HCT116 (cell line): ENCODE measurements at regions of chr22 and their contacts with region 1.

Region 1: DNA sequence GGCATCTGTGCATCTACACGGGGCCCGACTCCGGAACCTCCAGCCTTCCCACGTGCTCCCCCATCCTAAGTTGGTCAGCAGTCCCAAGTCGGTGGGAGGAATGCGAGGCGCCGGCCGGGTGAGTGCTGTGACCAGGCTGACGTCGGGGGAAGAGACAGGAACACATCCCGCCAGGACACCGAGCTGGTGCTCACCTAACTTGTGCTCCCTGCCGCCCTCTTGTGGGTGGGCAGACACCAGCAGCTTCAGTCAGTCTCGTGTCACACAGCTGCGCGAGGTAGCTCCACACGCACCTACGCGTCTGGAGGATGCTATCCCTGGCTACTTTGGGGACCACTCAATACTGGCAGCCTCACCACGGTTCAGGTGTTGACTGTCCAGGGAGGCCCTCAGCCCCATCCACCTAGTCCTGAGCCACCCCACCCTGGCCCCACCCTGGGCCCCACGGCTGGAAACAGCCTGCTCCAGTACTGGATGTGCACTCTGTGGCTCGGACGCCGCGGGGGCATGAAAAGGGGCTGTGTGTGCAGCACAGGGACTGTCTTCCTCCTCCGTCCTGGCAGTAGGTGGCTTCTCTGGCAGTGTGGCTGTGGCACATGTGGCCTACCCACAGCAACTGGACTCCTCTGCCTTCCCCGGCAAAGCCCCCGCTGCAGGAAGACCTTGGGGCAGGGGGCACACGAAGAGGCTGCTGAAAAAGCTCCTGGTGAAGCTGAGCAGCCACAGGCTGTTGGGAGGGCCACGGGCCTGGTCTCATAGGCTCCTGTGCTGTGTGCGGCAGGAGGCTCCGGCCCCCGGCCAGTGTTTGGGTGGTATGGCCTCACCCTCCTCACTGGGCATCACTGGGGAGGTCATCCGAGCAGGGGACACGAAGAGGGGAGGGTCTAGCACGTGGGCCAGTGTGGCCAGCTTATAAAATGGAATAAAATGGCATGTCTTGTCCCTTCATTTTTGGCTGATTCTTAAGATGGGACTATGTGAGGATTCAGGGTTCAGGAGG is 11.2 kb upstream of the BID start:
- DNase-seq: peak; percentile 41
- ATAC-seq: peak; percentile 96
- H3K4me3 ChIP-seq: no peak overlapping the region
- H3K27ac ChIP-seq: no peak overlapping the region
- H3K4me1 ChIP-seq: peaks cover 10 to 21% of the 10 kb centered on the region in 2 experiments; a peak in 3 of 4 replicates
- H3K27me3 ChIP-seq: no peaks in the 10 kb centered on the region
- CTCF ChIP-seq: peak; percentile 52 to 93 (median 82); a peak in 5 of 6 replicates
- POLR2A ChIP-seq: no peak
- RAD21 ChIP-seq: peak; percentile 64

Region 2: DNA sequence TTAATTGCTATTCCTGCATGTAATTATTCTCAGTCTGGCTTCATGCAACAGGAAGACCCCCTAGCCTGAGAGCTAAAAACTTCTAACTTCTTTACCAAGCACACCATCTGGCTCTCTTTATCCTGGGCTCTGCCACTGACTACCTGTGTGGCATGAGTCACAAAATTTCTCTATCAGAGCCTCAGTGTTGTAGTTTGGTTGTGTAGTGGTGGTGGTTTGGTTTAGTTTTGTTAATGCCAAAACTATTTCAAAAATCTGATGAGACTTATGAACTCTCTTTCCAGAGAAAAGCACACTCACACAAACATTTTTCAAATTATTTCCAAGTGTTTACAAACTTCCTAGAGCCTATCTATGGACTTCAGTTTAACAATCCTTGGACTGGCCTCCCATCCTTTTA is 708.2 kb before region 1 on chr22:
- CTCF ChIA-PET with region 1: interaction called, 12 read pairs
- POLR2A ChIA-PET with region 1: no interaction called
- RAD21 ChIA-PET with region 1: no interaction called
- intact Hi-C with region 1: no loop called
- DNase-seq: no peak
- ATAC-seq: no peak; the same call in 1 of the 2 replicates
- H3K4me3 ChIP-seq: no peak overlapping the region
- H3K27ac ChIP-seq: no peak overlapping the region
- H3K4me1 ChIP-seq: peaks cover 9 to 24% of the 10 kb centered on the region in 2 experiments
- H3K27me3 ChIP-seq: no peaks in the 10 kb centered on the region
- CTCF ChIP-seq: no peak
- POLR2A ChIP-seq: no peak
- RAD21 ChIP-seq: no peak

Region 3: DNA sequence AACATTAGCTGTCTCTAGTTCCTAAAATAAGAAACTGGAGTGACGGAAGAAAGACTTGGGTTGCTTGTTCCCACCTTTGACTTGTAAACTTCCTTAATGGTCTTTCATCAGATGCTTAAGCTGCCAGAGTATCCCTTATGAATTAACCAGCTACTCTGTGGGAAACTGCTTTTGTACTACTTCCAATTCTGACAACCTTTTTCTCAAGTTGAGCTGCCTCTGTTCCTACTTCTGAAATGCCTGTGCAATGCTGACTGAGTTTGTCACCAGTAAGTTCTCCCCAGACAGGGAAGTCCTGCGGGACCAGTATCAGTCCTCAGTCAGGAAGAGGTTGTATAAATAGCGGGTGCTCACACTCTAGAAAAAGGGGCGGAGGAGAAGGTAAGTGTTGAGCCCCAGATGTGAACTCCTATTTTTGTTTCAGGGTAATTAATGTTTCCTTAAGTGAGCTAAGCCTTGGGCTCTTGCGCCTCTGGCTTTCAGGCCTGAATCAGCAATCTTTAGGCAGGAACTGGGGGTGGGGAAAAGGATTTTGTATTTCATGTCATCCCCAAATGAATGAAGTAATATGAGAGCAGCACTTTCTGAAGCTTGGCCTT is 349.0 kb before region 1 on chr22:
- CTCF ChIA-PET with region 1: no interaction called
- POLR2A ChIA-PET with region 1: no interaction called
- RAD21 ChIA-PET with region 1: no interaction called
- intact Hi-C with region 1: no loop called
- DNase-seq: no peak
- ATAC-seq: no peak
- H3K4me3 ChIP-seq: no peak overlapping the region
- H3K27ac ChIP-seq: no peak overlapping the region
- H3K4me1 ChIP-seq: no peaks in the 10 kb centered on the region
- H3K27me3 ChIP-seq: no peaks in the 10 kb centered on the region
- CTCF ChIP-seq: no peak
- POLR2A ChIP-seq: no peak
- RAD21 ChIP-seq: no peak

Region 4: GRCh38 chr22:17562906-17563870 is 222.3 kb before region 1 on chr22 and contains the start of gene SLC25A18:
- CTCF ChIA-PET with region 1: interaction called, 96 read pairs
- POLR2A ChIA-PET with region 1: interaction called, 4 read pairs
- RAD21 ChIA-PET with region 1: interaction called, 8 to 10 read pairs
- intact Hi-C with region 1: loop called (anchors 1 kb)
- DNase-seq: no peak
- ATAC-seq: no peak
- H3K4me3 ChIP-seq: no peak within 1 kb of the TSS
- H3K27ac ChIP-seq: no peak within 1 kb of the TSS
- H3K4me1 ChIP-seq: no peaks in the 10 kb centered on the region
- H3K27me3 ChIP-seq: no peaks in the 10 kb centered on the region
- CTCF ChIP-seq: peak in 1 of 3 experiments; percentile 28; a peak in 1 of 6 replicates
- POLR2A ChIP-seq: no peak
- RAD21 ChIP-seq: no peak
- total RNA-seq, gene SLC25A18: not detected

Region 5: DNA sequence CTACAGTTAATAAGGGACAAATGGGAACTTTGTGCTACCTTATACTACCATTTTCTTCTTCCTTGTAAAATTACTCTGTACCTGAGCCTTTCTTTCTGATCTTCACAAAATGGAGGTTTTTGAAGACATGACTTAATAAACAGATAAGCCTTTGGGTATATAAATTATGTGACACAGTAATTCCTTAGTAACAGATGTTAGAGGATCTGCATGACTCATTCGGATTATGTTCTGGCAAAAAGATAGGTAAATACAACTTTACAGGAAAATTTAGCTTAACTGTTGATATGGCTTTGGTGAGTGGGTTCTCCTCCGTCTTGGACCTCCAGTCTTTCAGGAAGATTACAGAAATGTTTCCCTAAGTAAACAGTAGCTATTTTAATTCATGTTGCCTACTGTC is 73.0 kb before region 1 on chr22:
- CTCF ChIA-PET with region 1: no interaction called
- POLR2A ChIA-PET with region 1: no interaction called
- RAD21 ChIA-PET with region 1: no interaction called
- intact Hi-C with region 1: no loop called
- DNase-seq: no peak
- ATAC-seq: no peak
- H3K4me3 ChIP-seq: no peak overlapping the region
- H3K27ac ChIP-seq: no peak overlapping the region
- H3K4me1 ChIP-seq: no peaks in the 10 kb centered on the region
- H3K27me3 ChIP-seq: no peaks in the 10 kb centered on the region
- CTCF ChIP-seq: no peak
- POLR2A ChIP-seq: no peak
- RAD21 ChIP-seq: no peak

Region 6: DNA sequence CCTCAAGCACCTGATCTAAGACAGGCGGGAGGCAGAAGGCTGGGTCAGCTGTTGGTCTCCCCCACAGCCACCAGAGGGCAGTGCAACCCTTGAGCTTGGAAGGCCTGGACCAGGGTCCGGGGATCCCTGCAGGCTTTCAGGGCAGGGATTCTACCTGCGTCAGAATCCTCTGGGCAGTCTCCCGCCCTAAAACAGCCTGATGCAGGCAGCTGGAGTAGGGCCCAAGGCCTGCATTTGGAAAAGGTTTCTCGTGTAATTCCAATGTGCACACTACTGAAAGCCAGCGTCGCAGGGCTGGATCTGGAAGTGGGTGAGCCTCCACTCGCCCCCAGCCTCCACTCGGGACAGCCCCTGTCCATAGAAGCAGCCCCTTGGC is 43.0 kb before region 1 on chr22:
- CTCF ChIA-PET with region 1: interaction called, 87 read pairs
- POLR2A ChIA-PET with region 1: interaction called, 3 read pairs
- RAD21 ChIA-PET with region 1: interaction called, 4 to 7 read pairs
- intact Hi-C with region 1: loop called (anchors 1 kb)
- DNase-seq: peak; percentile 59
- ATAC-seq: peak; percentile 96
- H3K4me3 ChIP-seq: no peak overlapping the region
- H3K27ac ChIP-seq: no peak overlapping the region
- H3K4me1 ChIP-seq: no peaks in the 10 kb centered on the region
- H3K27me3 ChIP-seq: no peaks in the 10 kb centered on the region
- CTCF ChIP-seq: peak; percentile 40 to 90 (median 76); a peak in 5 of 6 replicates
- POLR2A ChIP-seq: no peak
- RAD21 ChIP-seq: peak; percentile 67

Region 7: DNA sequence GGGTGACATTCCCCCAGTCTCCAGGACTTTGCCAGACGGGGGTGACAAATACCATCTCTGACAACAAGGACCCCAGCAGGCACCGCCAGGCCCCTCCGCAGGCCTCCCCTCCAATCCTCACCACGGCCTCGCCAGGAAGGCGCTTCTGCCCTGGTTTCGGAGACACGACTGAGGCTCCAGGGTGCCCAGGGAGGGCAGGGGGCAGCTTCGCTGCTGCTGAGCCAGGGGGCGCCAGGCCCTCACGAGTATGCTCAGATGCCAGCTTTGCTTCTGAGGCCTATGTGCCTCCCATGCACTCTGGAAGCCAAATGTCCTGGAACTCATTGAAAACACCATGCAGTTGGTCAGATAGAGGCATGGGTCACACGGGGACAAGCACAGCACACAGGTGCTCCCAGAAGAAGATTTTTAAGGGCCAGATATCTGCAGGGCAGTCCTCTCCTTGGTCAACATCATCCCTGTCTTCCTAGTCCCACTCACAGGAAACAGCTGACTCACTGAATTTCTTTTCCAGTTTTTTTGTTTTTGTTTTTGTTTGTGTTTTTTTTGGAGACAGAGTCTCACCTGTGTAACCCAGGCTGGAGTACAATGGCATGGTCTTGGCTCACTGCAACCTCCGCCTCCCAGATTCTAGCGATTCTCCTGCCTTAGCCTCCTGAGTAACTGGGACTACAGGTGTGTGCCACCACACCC is 31.1 kb before region 1 on chr22:
- CTCF ChIA-PET with region 1: interaction called, 12 read pairs
- POLR2A ChIA-PET with region 1: no interaction called
- RAD21 ChIA-PET with region 1: no interaction called
- intact Hi-C with region 1: no loop called
- DNase-seq: no peak
- ATAC-seq: peak; percentile 72
- H3K4me3 ChIP-seq: no peak overlapping the region
- H3K27ac ChIP-seq: no peak overlapping the region
- H3K4me1 ChIP-seq: peaks cover 0 to 10% of the 10 kb centered on the region in 2 experiments; a peak in 1 of 4 replicates
- H3K27me3 ChIP-seq: no peaks in the 10 kb centered on the region
- CTCF ChIP-seq: peak in 2 of 3 experiments; percentile 45 to 48; a peak in 3 of 6 replicates
- POLR2A ChIP-seq: no peak
- RAD21 ChIP-seq: peak; percentile 43; the same call in 1 of the 2 replicates